Activated naive CD4-positive, alpha-beta T cell treated with anti-CD3 and anti-CD28 coated beads for 36 hours (primary cell): ENCODE measurements at regions of chr15 and their contacts with region 1.

Region 1: DNA sequence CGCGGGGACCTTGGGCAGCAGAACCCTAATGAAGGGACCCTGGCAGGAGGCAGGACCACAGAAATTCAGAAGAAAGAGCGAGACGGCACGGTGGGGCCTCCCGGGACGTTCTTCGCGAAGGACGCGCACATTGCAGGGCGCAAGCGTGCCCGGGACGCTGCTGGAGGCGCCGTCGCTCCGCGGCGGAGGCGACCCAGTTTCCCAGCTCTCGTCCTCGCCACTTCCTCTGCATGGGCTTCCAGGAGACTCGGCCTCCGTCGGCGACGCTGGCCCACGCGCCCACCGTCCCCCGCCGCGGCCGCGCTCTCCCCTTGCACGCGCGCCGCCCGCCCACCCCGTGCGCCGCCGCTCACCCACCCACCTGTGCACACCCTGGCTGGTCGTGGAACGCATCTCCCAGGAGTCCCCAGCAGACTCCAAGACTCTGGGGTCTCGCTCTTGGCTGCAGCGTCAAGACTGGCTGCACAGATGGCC is 31.8 kb upstream of the SMAD3 start:
- DNase-seq: peak; percentile 40
- H3K4me3 Mint-ChIP-seq: peak overlapping the region; percentile 65
- H3K27ac Mint-ChIP-seq: no peak overlapping the region
- H3K4me1 Mint-ChIP-seq: peaks cover 17% of the 10 kb centered on the region
- H3K27me3 Mint-ChIP-seq: no peaks in the 10 kb centered on the region

Region 2: DNA sequence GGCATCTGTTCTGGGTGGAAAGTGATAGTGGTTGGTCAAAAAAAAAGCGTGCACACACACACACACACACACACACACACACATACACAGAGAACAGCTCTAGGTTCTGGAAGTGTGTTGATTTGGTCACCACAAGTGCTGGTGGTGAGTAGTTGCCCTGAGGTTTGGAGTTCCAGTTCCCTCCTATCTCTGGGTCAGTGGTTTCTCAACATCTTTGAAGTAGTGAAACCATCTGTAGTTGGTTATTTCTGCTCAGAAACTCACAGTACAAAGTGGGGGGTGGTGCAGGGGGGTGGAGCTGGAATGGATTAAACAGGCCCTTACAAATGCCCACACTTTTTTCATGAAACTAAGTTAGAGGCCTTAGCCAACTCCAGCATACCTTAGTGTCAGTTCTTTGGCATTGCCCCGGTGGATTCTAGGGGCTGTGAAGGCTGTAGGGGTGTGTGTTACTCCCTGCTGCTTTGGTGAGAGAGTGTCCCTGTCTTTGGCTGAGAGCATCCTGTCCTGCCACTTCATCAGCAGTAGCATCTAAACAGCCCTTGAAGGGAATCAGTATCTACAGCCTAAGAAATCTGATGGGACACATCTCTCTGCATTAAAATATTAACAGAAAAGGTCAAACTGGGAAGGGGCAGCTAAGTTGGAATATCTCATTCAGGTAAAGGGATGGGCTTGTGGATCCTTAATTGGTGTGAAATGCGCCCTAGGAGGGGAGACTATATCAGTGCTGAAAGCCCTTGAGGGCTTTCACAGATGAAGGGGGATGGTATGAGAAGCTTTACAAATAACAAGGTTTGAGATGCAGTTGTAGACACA is 52.4 kb after region 1 on chr15:
- CTCF ChIA-PET with region 1: interaction called, 4 read pairs
- intact Hi-C with region 1: loop called (anchors 2 kb)
- DNase-seq: peak; percentile 44
- H3K4me3 Mint-ChIP-seq: no peak overlapping the region
- H3K27ac Mint-ChIP-seq: peak overlapping the region; percentile 78
- H3K4me1 Mint-ChIP-seq: peaks cover 88% of the 10 kb centered on the region
- H3K27me3 Mint-ChIP-seq: no peaks in the 10 kb centered on the region

Region 3: DNA sequence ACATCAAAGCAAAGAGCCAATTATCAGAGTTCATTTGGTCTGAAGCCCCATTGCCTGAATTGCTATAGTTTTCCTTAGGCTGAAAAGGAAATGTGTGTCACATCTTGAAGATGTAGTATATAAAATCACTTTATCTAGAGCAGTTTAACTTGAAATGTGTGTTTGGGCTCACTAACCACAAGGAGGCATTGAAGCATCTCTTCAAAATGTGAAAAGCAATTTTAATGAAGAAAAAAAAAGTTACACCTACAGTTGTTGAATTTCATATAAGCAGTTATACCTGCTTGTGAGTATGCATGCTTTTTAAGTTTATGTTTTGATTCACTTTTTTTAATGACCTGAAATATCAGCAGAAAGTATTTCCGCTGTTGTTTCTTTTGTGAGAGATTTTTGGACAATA is 350.3 kb after region 1 on chr15:
- CTCF ChIA-PET with region 1: no interaction called
- intact Hi-C with region 1: no loop called
- DNase-seq: no peak
- H3K4me3 Mint-ChIP-seq: no peak overlapping the region
- H3K27ac Mint-ChIP-seq: no peak overlapping the region
- H3K4me1 Mint-ChIP-seq: no peaks in the 10 kb centered on the region
- H3K27me3 Mint-ChIP-seq: no peaks in the 10 kb centered on the region